Activated B cell treated with CpG ODN at 0.5 μM for 24 hours (primary cell): ENCODE measurements at regions of chr20 and their contacts with region 1.

Region 1: GRCh38 chr20:53915446-53916172 is 154.8 kb downstream of the BCAS1 start:
- DNase-seq: peak; percentile 76
- ATAC-seq: peak; percentile 88
- H3K4me3 Mint-ChIP-seq: peak overlapping the region; percentile 94
- H3K27ac Mint-ChIP-seq: peak overlapping the region; percentile 93
- H3K4me1 Mint-ChIP-seq: peaks cover 57% of the 10 kb centered on the region
- H3K27me3 Mint-ChIP-seq: no peaks in the 10 kb centered on the region
- CTCF ChIP-seq: no peak

Region 2: GRCh38 chr20:53643031-53643832 is 272.4 kb before region 1 on chr20:
- CTCF ChIA-PET with region 1: interaction called, 5 read pairs
- POLR2A ChIA-PET with region 1: interaction called, 3 read pairs
- intact Hi-C with region 1: loop called (anchors 5 kb)
- DNase-seq: no peak
- ATAC-seq: peak; percentile 94
- H3K4me3 Mint-ChIP-seq: peak overlapping the region; percentile 78
- H3K27ac Mint-ChIP-seq: peak overlapping the region; percentile 94
- H3K4me1 Mint-ChIP-seq: peaks cover 36% of the 10 kb centered on the region
- H3K27me3 Mint-ChIP-seq: no peaks in the 10 kb centered on the region
- CTCF ChIP-seq: no peak

Region 3: DNA sequence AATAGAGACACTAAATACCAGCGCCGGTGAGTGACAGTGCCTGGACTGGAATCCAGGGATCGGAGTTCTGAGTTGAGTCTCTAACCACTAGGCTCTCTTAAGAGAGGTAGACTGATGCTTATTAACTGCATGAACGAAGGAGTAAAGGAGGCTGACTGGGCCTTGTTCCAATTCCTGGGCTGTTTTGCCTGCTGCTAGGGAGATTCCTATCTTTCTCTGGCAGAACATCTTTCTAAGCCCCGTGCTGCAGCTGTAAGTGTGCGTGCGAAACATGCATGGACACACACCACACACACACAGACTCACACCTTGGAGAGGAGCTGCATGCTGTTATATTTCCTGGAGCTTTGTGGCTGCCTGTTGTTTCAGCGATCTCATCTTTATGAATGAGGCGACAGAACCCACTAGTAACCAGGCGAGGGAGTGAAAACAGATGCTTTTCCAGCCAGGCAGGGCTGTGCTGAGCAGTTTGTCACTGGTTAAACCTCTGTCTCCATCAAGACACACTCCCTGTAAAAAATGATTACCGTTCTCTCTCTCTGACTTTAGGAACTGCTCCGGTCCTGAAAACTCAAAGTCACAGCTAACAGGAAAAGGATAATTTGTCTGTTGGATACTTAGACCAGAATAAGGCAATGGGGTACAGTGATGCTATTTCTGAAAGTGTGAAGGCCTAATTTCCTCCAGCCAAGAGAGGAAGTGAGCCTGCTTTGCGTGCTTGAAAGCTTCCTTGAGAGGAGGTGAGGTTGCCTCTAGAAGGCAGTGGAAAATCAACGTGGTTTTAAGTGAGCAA is 164.6 kb before region 1 on chr20:
- CTCF ChIA-PET with region 1: interaction called, 5 read pairs
- POLR2A ChIA-PET with region 1: no interaction called
- intact Hi-C with region 1: loop called (anchors 5 kb)
- DNase-seq: no peak
- ATAC-seq: peak; percentile 87
- H3K4me3 Mint-ChIP-seq: peak overlapping the region; percentile 45
- H3K27ac Mint-ChIP-seq: peak overlapping the region; percentile 95
- H3K4me1 Mint-ChIP-seq: peaks cover 64% of the 10 kb centered on the region
- H3K27me3 Mint-ChIP-seq: no peaks in the 10 kb centered on the region
- CTCF ChIP-seq: no peak

Region 4: GRCh38 chr20:53891306-53891944 is 24.2 kb before region 1 on chr20:
- CTCF ChIA-PET with region 1: interaction called, 3 read pairs
- POLR2A ChIA-PET with region 1: interaction called, 9 read pairs
- intact Hi-C with region 1: loop called (anchors 2 kb)
- DNase-seq: no peak
- ATAC-seq: no peak
- H3K4me3 Mint-ChIP-seq: no peak overlapping the region
- H3K27ac Mint-ChIP-seq: peak overlapping the region; percentile 9
- H3K4me1 Mint-ChIP-seq: peaks cover 38% of the 10 kb centered on the region
- H3K27me3 Mint-ChIP-seq: no peaks in the 10 kb centered on the region
- CTCF ChIP-seq: no peak

Region 5: DNA sequence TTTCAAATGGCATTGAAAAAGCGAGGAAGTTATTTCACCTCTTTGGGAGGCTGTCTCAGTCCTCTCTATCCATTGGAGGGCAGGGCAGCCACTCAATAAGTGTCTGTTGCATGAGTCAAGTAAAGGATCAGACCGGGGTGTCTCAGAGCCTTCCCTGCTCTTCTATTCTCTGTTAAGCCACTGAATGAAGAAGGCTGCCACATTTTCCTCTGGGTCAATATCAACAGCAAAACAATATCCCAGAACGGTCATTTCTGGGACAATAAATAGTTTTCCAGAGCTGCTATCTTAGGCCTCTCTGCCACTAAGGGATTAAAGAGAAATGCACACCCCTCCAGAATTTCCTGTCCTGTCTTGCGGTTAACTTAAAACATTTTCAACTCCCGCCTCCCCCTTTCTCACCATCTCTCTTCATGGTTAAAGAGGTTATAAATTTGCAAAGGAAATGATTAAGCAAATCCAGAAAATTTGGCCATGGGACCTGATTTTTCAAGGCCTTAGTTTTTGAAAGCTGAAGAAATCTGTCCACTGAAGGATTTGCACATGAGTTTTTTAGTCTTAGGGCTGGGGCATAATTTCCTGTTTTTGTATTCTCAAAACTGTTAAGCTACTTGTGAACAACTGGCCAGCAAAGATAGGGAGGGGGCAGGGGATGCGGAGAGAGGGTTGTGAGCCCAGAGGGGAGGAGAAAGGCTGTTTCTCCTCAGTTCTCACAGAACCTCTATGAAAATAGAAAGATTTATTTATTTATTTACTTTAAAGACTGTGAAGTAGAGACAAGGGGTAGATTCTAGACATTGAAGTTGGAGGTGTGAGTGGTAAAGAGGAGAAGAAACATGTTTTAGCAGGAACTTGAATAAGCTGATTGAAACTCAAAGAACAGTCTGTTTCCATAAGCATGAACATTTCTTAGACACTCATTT is 19.1 kb after region 1 on chr20:
- CTCF ChIA-PET with region 1: interaction called, 115 read pairs
- POLR2A ChIA-PET with region 1: interaction called, 182 read pairs
- intact Hi-C with region 1: loop called (anchors 2 kb)
- DNase-seq: no peak
- ATAC-seq: peak; percentile 41
- H3K4me3 Mint-ChIP-seq: peak overlapping the region; percentile 60
- H3K27ac Mint-ChIP-seq: peak overlapping the region; percentile 90
- H3K4me1 Mint-ChIP-seq: peaks cover 89% of the 10 kb centered on the region
- H3K27me3 Mint-ChIP-seq: no peaks in the 10 kb centered on the region
- CTCF ChIP-seq: no peak

Region 6: DNA sequence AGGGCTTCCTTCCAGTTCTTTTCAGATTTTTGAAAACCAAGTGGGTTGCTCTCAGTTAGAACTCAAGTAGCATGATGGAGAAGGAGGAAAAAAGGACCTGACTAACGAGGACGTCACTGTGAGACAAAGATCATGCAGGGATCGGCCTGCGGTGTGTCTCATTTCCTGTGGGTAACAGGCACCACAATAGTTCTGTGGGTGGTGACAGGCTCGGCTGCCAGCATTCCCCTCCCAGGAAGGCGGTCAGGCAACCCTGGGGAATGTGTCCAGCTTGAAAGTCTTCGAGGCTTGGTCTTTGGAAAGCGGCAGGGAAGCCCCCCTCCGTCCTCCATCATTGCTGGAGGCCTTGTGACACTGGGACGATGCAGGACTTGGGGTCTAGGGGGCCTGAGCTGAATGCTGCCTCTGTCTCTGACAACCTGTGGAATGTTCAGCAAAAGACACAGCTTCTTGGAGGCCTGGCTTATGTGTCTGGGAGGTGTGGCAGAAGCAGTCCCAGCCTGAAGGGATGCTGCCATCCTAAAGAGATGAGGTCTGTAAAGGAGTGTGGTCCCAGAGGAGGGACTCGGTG is 33.8 kb after region 1 on chr20:
- CTCF ChIA-PET with region 1: no interaction called
- POLR2A ChIA-PET with region 1: no interaction called
- intact Hi-C with region 1: no loop called
- DNase-seq: peak; percentile 47
- ATAC-seq: peak; percentile 90
- H3K4me3 Mint-ChIP-seq: peak overlapping the region; percentile 71
- H3K27ac Mint-ChIP-seq: peak overlapping the region; percentile 87
- H3K4me1 Mint-ChIP-seq: peaks cover 25% of the 10 kb centered on the region
- H3K27me3 Mint-ChIP-seq: no peaks in the 10 kb centered on the region
- CTCF ChIP-seq: no peak

Region 7: DNA sequence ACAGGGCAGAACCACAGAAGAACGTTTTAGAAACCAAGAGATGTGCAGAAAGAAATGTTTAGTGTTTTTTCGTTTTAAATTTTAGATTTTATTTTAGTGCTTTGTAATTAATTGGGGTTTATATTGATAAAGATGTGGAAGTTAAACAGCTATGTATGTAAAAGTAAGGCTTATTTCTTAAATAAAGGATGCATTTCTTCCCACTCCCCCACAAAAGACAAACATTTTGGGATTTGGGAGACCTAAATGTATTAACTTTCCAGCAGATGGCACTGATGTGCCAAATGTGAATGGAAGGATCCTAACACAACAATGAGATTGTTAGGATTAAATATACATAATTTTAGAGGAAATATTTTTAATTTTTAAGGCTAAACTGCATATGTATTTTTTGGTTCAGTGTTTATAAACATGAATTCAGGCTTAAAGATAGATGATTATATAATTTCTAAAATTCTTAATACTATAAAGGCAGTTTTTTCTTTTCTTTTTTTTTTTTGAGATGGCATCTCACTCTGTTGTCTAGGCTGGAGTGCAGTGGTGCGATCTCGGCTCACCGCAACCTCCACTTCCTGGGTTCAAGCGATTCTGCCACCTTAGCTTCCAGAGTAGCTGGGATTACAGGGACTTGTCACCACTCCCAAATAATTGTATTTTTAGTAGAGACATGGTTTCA is 304.3 kb after region 1 on chr20:
- CTCF ChIA-PET with region 1: no interaction called
- POLR2A ChIA-PET with region 1: no interaction called
- intact Hi-C with region 1: no loop called
- DNase-seq: no peak
- ATAC-seq: no peak
- H3K4me3 Mint-ChIP-seq: no peak overlapping the region
- H3K27ac Mint-ChIP-seq: no peak overlapping the region
- H3K4me1 Mint-ChIP-seq: no peaks in the 10 kb centered on the region
- H3K27me3 Mint-ChIP-seq: no peaks in the 10 kb centered on the region
- CTCF ChIP-seq: no peak